ENCODE measurements at regions of chr6 and their contacts with region 1.

Region 1: GRCh38 chr6:47283993-47284392 is 25.7 kb downstream of the TNFRSF21 start:
- DNase-seq: no peak
- ATAC-seq: no peak
- H3K4me3 ChIP-seq: no peak overlapping the region
- H3K27ac ChIP-seq: no peak overlapping the region
- H3K4me1 ChIP-seq: peaks cover 13% of the 10 kb centered on the region
- H3K27me3 ChIP-seq: no peaks in the 10 kb centered on the region
- CTCF ChIP-seq: no peak
- EP300 ChIP-seq: no peak
- POLR2A ChIP-seq: no peak
- RAD21 ChIP-seq: no peak

Region 2: DNA sequence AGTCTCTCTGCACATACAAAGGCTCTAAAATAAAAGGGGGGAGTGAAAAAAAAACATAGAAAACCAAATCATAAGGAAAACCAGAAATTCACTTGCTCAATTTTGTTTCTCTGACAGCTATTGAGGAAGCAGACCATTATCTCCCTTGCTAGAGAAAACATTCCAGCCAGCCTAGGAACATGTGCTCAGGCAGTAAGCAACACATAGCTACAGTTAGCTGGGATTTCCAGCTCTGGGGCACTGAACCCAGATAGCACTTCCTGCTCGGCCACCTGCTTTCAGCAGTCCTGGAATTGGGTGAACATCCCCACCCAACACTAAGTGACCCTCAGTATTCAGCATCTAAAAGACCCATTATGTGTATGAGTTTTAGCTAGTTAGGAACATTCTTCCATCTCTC is 35.5 kb before region 1 on chr6:
- CTCF ChIA-PET with region 1: no interaction called
- POLR2A ChIA-PET with region 1: no interaction called
- in situ Hi-C with region 1: no loop called
- intact Hi-C with region 1: no loop called
- DNase-seq: no peak
- ATAC-seq: no peak
- H3K4me3 ChIP-seq: no peak overlapping the region
- H3K27ac ChIP-seq: no peak overlapping the region
- H3K4me1 ChIP-seq: peaks cover 32% of the 10 kb centered on the region
- H3K27me3 ChIP-seq: no peaks in the 10 kb centered on the region
- CTCF ChIP-seq: no peak
- EP300 ChIP-seq: no peak
- POLR2A ChIP-seq: no peak
- RAD21 ChIP-seq: no peak

Region 3: GRCh38 chr6:47264775-47265184 is 19.2 kb before region 1 on chr6:
- CTCF ChIA-PET with region 1: no interaction called
- POLR2A ChIA-PET with region 1: no interaction called
- in situ Hi-C with region 1: no loop called
- intact Hi-C with region 1: loop called (anchors 2 kb)
- DNase-seq: no peak
- ATAC-seq: no peak
- H3K4me3 ChIP-seq: no peak overlapping the region
- H3K27ac ChIP-seq: no peak overlapping the region
- H3K4me1 ChIP-seq: peaks cover 17% of the 10 kb centered on the region
- H3K27me3 ChIP-seq: no peaks in the 10 kb centered on the region
- CTCF ChIP-seq: no peak
- EP300 ChIP-seq: no peak
- POLR2A ChIP-seq: no peak
- RAD21 ChIP-seq: no peak

Region 4: GRCh38 chr6:47581591-47581990 is 297.6 kb after region 1 on chr6:
- CTCF ChIA-PET with region 1: no interaction called
- POLR2A ChIA-PET with region 1: no interaction called
- in situ Hi-C with region 1: no loop called
- intact Hi-C with region 1: no loop called
- DNase-seq: no peak
- ATAC-seq: no peak
- H3K4me3 ChIP-seq: no peak overlapping the region
- H3K27ac ChIP-seq: no peak overlapping the region
- H3K4me1 ChIP-seq: no peaks in the 10 kb centered on the region
- H3K27me3 ChIP-seq: no peaks in the 10 kb centered on the region
- CTCF ChIP-seq: no peak
- EP300 ChIP-seq: no peak
- POLR2A ChIP-seq: no peak
- RAD21 ChIP-seq: no peak

Measured in HepG2 (cell line).